Activated CD4-positive, alpha-beta T cell treated with anti-CD3 and anti-CD28 coated beads for 36 hours (primary cell): ENCODE measurements at regions of chr11 and their contacts with region 1.

Region 1: GRCh38 chr11:58980159-58980843 is 41.0 kb downstream of the GLYATL1 start:
- DNase-seq: no peak
- ATAC-seq: no peak
- H3K4me3 Mint-ChIP-seq: no peak overlapping the region
- H3K27ac Mint-ChIP-seq: no peak overlapping the region
- H3K4me1 Mint-ChIP-seq: no peaks in the 10 kb centered on the region
- H3K27me3 Mint-ChIP-seq: peaks cover 4% of the 10 kb centered on the region

Region 2: DNA sequence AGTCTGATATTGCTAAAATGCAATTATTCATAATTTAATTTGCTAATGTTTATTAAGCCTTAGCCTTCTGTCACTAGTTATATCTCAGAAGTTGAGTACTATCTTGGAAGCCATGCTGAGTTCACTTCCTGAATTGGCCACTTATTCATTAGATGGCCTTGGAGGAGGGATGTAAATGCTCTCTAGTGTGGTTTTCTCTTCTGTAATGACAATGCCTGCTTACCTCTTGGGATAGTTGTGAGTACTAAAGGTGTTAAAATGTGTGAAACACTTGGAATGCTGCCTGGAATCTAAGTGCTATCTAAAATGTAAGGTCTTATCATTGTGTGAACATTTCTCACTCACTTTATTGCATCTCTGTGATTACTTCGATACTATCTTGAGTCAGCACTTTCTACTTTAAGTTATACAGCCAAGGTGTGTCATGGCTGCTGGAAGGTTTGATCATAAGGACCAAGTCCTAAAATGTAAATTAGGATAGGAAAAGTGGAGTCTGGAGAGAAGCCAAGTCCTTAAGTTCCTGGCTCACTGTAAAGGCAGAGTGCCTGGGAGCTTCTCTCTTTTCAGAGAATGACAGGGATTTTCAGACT is 148.2 kb before region 1 on chr11:
- CTCF ChIA-PET with region 1: no interaction called
- POLR2A ChIA-PET with region 1: no interaction called
- intact Hi-C with region 1: no loop called
- DNase-seq: no peak
- ATAC-seq: no peak
- H3K4me3 Mint-ChIP-seq: no peak overlapping the region
- H3K27ac Mint-ChIP-seq: no peak overlapping the region
- H3K4me1 Mint-ChIP-seq: no peaks in the 10 kb centered on the region
- H3K27me3 Mint-ChIP-seq: peaks cover 17% of the 10 kb centered on the region

Region 3: GRCh38 chr11:58957923-58958322 is 22.4 kb before region 1 on chr11:
- CTCF ChIA-PET with region 1: no interaction called
- POLR2A ChIA-PET with region 1: no interaction called
- intact Hi-C with region 1: no loop called
- DNase-seq: peak; percentile 31
- ATAC-seq: peak; percentile 98
- H3K4me3 Mint-ChIP-seq: no peak overlapping the region
- H3K27ac Mint-ChIP-seq: no peak overlapping the region
- H3K4me1 Mint-ChIP-seq: peaks cover 7% of the 10 kb centered on the region
- H3K27me3 Mint-ChIP-seq: peaks cover 5% of the 10 kb centered on the region

Region 4: DNA sequence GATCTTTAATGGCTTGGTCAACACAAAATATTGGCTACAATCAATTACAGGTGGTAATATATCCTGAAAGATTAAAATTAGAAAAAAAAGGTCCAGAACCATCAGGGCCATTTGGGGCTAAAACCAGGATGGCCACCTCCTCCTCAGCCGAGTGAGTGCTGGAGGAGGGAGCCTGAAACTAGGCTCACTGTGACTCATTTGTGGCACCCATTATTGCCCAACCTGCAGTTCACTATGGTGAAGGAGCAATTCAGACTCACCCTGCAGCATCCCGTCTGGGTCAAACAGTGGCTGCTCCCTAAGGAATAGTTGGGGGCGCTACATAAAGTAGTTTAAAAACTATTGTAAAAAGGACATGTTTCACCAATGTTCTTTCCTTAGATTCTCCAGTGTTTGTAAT is 19.7 kb after region 1 on chr11:
- CTCF ChIA-PET with region 1: no interaction called
- POLR2A ChIA-PET with region 1: no interaction called
- intact Hi-C with region 1: loop called in 1 of 2 experiments (anchors 2 kb)
- DNase-seq: no peak
- ATAC-seq: no peak
- H3K4me3 Mint-ChIP-seq: no peak overlapping the region
- H3K27ac Mint-ChIP-seq: no peak overlapping the region
- H3K4me1 Mint-ChIP-seq: no peaks in the 10 kb centered on the region
- H3K27me3 Mint-ChIP-seq: peaks cover 11% of the 10 kb centered on the region